AG04450 (cell line): ENCODE measurements at regions of chr4 and their contacts with region 1.

Region 1: DNA sequence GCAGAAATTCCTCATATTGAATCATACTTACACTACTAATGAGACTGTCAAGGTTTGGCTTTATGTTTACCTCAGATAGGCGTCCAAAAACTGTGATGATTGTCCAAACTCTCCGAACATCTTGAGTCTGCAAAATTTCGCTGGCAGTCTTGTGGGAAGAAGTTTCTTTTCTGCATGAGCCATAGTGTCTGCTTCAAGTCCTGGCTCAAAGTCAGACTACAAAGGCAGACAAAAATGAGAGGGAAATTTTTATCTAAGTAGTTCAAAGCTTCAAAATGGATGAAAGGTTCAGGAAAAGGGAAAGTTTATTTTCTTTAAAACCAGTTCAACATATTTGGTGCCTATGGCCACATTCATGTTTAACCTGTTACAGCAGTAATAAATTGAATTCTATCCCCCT is 40.7 kb downstream of the PALLD start:
- DNase-seq: no peak
- H3K4me3 ChIP-seq: no peak overlapping the region
- H3K27ac ChIP-seq: no peak overlapping the region
- H3K27me3 ChIP-seq: no peaks in the 10 kb centered on the region
- CTCF ChIP-seq: no peak

Region 2: DNA sequence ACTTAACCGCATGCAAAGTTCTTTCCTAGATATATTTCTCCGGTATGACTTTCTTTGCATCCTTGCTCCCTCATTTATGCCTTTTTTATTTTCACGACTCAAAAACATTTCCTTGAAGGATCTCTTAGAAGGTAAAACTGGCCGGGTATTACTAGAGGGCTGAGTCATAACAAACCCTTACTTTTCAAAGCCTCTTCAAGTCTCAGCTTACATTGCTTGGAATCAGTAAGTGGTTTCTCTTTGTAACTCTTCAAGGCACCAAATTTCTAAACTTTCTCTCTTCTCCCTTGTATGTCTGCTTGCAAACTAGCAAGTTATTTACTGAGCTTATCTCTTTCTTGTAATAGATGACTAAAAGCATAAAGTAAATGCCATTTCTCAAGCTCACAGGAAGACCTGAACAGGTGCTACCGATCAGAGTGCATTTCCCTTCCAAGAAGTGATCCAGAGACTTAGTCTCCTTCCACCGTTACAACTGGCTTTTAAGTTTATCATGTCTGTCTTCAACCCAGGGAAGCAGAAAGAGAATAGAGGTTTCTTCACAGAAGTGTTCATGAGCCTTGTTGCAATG is 369.8 kb before region 1 on chr4:
- CTCF ChIA-PET with region 1: no interaction called
- POLR2A ChIA-PET with region 1: no interaction called
- DNase-seq: no peak
- H3K4me3 ChIP-seq: no peak overlapping the region
- H3K27ac ChIP-seq: no peak overlapping the region
- H3K27me3 ChIP-seq: no peaks in the 10 kb centered on the region
- CTCF ChIP-seq: no peak

Region 3: GRCh38 chr4:168514249-168514852 is 23.2 kb before region 1 on chr4:
- CTCF ChIA-PET with region 1: interaction called, 13 read pairs
- POLR2A ChIA-PET with region 1: no interaction called
- DNase-seq: no peak
- H3K4me3 ChIP-seq: no peak overlapping the region
- H3K27ac ChIP-seq: no peak overlapping the region
- H3K27me3 ChIP-seq: no peaks in the 10 kb centered on the region
- CTCF ChIP-seq: peak; percentile 42